Activated CD4-positive, alpha-beta T cell treated with anti-CD3 and anti-CD28 coated beads for 36 hours (primary cell): ENCODE measurements at regions of chr20 and their contacts with region 1.

Region 1: GRCh38 chr20:36573103-36573794 is at the start of gene TGIF2:
- DNase-seq: peak; percentile 95
- ATAC-seq: peak; percentile 75
- H3K4me3 Mint-ChIP-seq: peak within 1 kb of the TSS; percentile 88
- H3K27ac Mint-ChIP-seq: peak within 1 kb of the TSS; percentile 93
- H3K4me1 Mint-ChIP-seq: peaks cover 35% of the 10 kb centered on the region
- H3K27me3 Mint-ChIP-seq: no peaks in the 10 kb centered on the region
- total RNA-seq, gene TGIF2: 44.9 to 48.7 TPM

Region 2: DNA sequence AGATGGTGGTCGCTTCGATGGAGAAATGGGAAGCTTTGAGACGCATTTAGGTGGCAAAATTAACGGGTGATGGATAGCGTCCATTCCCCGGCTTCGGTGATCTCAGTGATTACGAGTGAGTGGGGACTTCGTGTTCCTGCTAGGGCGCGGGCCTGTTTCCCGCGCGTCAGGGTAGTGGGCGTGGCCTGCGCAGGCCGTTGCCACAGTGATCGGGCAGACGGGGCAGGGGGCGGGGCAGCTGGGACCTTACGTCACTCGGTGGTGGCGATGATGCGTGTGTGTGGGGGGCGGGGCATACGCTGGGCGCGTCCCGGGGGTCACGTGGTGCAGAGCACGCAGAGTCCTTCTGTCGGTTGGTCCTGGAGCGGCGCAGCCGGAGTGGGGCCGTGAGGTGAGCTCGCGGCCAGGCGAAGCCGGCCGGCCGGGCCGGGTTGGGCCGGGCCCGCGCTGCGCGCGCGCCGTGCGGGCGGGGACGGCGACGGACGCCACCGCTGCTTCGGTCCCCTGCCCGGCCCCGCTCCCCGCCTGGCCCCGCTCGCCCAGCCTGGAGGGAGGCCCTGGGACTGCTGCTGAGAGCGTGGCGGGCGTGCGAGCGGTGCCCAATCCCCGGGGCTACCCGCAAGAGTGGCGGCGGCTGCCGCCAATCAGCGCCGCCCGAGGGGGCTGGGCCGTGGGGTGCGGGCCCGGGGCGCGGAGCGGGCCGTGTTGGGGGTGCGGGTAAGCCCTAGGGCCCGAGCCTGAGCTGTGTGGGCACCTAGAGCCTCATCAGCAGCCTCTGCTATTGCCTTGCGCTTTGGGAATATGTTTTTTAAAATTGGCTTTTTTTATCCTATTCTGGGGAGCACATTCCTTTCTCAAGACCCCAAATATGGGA is 801.3 kb before region 1 on chr20 and contains the start of gene PHF20:
- CTCF ChIA-PET with region 1: no interaction called
- POLR2A ChIA-PET with region 1: no interaction called
- intact Hi-C with region 1: loop called in 1 of 2 experiments (anchors 2 kb)
- DNase-seq: peak; percentile 100
- ATAC-seq: peak; percentile 91
- H3K4me3 Mint-ChIP-seq: peak within 1 kb of the TSS; percentile 81
- H3K27ac Mint-ChIP-seq: peak within 1 kb of the TSS; percentile 94
- H3K4me1 Mint-ChIP-seq: peaks cover 76% of the 10 kb centered on the region
- H3K27me3 Mint-ChIP-seq: no peaks in the 10 kb centered on the region
- total RNA-seq, gene PHF20: 54.3 to 61.6 TPM

Region 3: GRCh38 chr20:36591854-36592641 is 18.8 kb after region 1 on chr20:
- CTCF ChIA-PET with region 1: interaction called, 18 read pairs
- POLR2A ChIA-PET with region 1: interaction called, 7 read pairs
- intact Hi-C with region 1: loop called (anchors 1 to 2 kb)
- DNase-seq: peak; percentile 76
- ATAC-seq: peak; percentile 50
- H3K4me3 Mint-ChIP-seq: peak overlapping the region; percentile 4
- H3K27ac Mint-ChIP-seq: peak overlapping the region; percentile 69
- H3K4me1 Mint-ChIP-seq: peaks cover 57% of the 10 kb centered on the region
- H3K27me3 Mint-ChIP-seq: no peaks in the 10 kb centered on the region

Region 4: DNA sequence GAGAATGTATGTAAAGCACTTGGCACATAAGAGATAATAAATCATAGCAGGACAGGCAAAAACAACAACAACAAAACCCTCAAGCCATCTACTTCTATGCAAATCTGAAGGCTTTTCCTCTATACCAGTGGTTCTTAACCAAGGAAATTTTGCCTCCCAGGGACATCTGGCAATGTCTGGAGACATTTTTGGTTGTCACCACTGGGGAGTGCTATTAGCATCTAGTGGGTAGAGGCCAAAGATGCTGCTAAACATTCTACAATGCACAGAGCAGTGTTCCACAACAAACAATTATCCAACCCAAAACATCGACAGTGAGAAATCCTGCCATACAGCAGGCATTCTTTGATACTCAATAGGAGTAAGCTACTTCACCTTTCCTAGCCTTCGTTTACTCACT is 144.4 kb after region 1 on chr20:
- CTCF ChIA-PET with region 1: no interaction called
- POLR2A ChIA-PET with region 1: no interaction called
- intact Hi-C with region 1: loop called in 1 of 2 experiments (anchors 1 kb)
- DNase-seq: peak; percentile 17
- ATAC-seq: no peak
- H3K4me3 Mint-ChIP-seq: no peak overlapping the region
- H3K27ac Mint-ChIP-seq: no peak overlapping the region
- H3K4me1 Mint-ChIP-seq: peaks cover 11% of the 10 kb centered on the region
- H3K27me3 Mint-ChIP-seq: no peaks in the 10 kb centered on the region

Region 5: GRCh38 chr20:36835453-36836198 is 262.4 kb after region 1 on chr20:
- CTCF ChIA-PET with region 1: no interaction called
- POLR2A ChIA-PET with region 1: no interaction called
- intact Hi-C with region 1: loop called in 1 of 2 experiments (anchors 1 kb)
- DNase-seq: peak; percentile 94
- ATAC-seq: peak; percentile 98
- H3K4me3 Mint-ChIP-seq: peak overlapping the region; percentile 76
- H3K27ac Mint-ChIP-seq: peak overlapping the region; percentile 85
- H3K4me1 Mint-ChIP-seq: peaks cover 13% of the 10 kb centered on the region
- H3K27me3 Mint-ChIP-seq: no peaks in the 10 kb centered on the region

Region 6: DNA sequence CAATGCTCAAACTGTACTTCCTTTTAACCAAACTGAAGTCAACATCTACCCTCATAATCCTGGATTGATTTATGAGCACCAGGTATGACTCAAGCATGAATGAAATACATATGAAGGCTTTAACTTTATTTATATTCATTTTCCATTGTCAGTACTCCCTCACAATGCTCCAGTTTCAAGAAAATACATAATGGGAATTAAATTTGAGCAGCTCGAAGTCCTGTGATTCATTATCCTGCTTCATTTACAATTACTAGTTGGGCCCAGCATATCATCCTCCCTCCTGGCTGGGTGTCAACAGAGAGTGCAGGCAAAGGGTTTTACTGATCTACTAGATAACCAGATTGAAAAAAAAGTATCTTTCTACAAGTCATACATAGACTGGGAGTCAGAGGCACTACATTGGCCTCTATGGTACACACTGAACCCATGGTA is 368.2 kb after region 1 on chr20:
- CTCF ChIA-PET with region 1: no interaction called
- POLR2A ChIA-PET with region 1: no interaction called
- intact Hi-C with region 1: no loop called
- DNase-seq: peak; percentile 42
- ATAC-seq: peak; percentile 79
- H3K4me3 Mint-ChIP-seq: peak overlapping the region; percentile 15
- H3K27ac Mint-ChIP-seq: peak overlapping the region; percentile 92
- H3K4me1 Mint-ChIP-seq: peaks cover 77% of the 10 kb centered on the region
- H3K27me3 Mint-ChIP-seq: no peaks in the 10 kb centered on the region